ENCODE measurements at regions of chr4 and their contacts with region 1.

Region 1: GRCh38 chr4:26076000-26076587 is 162.1 kb downstream of the SMIM20 start:
- DNase-seq: peak; percentile 84
- ATAC-seq: peak; percentile 75
- H3K4me3 ChIP-seq: no peak overlapping the region
- H3K27ac ChIP-seq: peak overlapping the region; percentile 57
- H3K4me1 ChIP-seq: peaks cover 35% of the 10 kb centered on the region
- H3K27me3 ChIP-seq: no peaks in the 10 kb centered on the region
- CTCF ChIP-seq: no peak
- EP300 ChIP-seq: peak; percentile 70 to 90
- POLR2A ChIP-seq: no peak
- RAD21 ChIP-seq: no peak

Region 2: GRCh38 chr4:26028793-26029567 is 47.1 kb before region 1 on chr4:
- CTCF ChIA-PET with region 1: no interaction called
- POLR2A ChIA-PET with region 1: no interaction called
- RAD21 ChIA-PET with region 1: interaction called, 11 read pairs
- SMC1A ChIA-PET with region 1: interaction called, 3 read pairs
- in situ Hi-C with region 1: no loop called
- intact Hi-C with region 1: no loop called
- DNase-seq: no peak
- ATAC-seq: peak; percentile 99
- H3K4me3 ChIP-seq: no peak overlapping the region
- H3K27ac ChIP-seq: no peak overlapping the region
- H3K4me1 ChIP-seq: peaks cover 4% of the 10 kb centered on the region
- H3K27me3 ChIP-seq: no peaks in the 10 kb centered on the region
- CTCF ChIP-seq: peak; percentile 75 to 89 (median 85)
- EP300 ChIP-seq: no peak
- POLR2A ChIP-seq: no peak
- RAD21 ChIP-seq: peak; percentile 93

Region 3: GRCh38 chr4:26088433-26088928 is 12.4 kb after region 1 on chr4:
- CTCF ChIA-PET with region 1: interaction called, 9 read pairs
- POLR2A ChIA-PET with region 1: interaction called, 8 read pairs
- RAD21 ChIA-PET with region 1: interaction called, 31 read pairs
- SMC1A ChIA-PET with region 1: interaction called, 37 read pairs
- in situ Hi-C with region 1: no loop called
- intact Hi-C with region 1: no loop called
- DNase-seq: peak; percentile 80
- ATAC-seq: peak; percentile 92
- H3K4me3 ChIP-seq: no peak overlapping the region
- H3K27ac ChIP-seq: peak overlapping the region; percentile 29; the same call in 1 of the 2 replicates
- H3K4me1 ChIP-seq: peaks cover 30% of the 10 kb centered on the region
- H3K27me3 ChIP-seq: no peaks in the 10 kb centered on the region
- CTCF ChIP-seq: no peak
- EP300 ChIP-seq: peak; percentile 23 to 72; a peak in 2 of 4 replicates
- POLR2A ChIP-seq: no peak
- RAD21 ChIP-seq: no peak

Region 4: DNA sequence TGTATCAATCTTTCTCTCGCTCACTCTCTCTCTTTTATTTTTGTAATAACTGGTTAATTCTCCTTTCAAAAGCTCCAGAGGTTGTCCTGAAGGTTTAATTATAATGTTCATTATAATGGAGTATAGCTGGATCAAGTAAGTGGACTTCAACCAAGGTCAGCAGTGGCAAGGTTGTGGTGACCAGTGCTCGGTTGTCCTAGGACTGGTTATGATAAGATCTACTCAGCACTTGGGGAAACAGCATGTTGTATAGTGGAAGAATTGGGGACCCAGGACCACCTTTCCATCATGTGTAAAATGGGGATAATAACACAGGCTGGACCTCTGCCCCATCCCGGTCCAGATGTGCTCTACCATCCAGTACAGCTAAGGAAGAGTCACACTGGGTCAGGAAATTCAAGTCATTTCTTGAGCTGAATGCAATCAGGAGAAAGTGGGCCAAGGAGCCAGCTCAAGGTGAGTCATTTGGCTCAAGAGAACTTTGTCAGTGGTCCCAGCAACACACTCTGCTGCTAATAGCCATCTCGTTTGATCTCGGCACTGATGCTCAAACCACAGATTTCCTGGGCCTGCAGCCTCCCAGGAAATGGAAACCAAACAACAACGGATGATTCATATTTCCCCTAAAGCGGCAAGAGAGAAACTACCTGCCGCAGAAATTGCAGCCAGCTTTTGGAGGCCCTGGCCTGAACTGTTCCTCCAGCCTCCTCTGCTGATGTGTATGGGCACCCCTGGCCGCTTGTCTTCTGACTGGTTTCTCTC is 121.1 kb after region 1 on chr4:
- CTCF ChIA-PET with region 1: interaction called, 8 read pairs
- POLR2A ChIA-PET with region 1: no interaction called
- RAD21 ChIA-PET with region 1: interaction called, 13 read pairs
- SMC1A ChIA-PET with region 1: interaction called, 7 read pairs
- in situ Hi-C with region 1: no loop called
- intact Hi-C with region 1: loop called (anchors 5 kb)
- DNase-seq: peak; percentile 89
- ATAC-seq: peak; percentile 84
- H3K4me3 ChIP-seq: no peak overlapping the region
- H3K27ac ChIP-seq: peak overlapping the region; percentile 14; the same call in 1 of the 2 replicates
- H3K4me1 ChIP-seq: peaks cover 35% of the 10 kb centered on the region
- H3K27me3 ChIP-seq: no peaks in the 10 kb centered on the region
- CTCF ChIP-seq: no peak
- EP300 ChIP-seq: peak; percentile 49 to 50; a peak in 2 of 4 replicates
- POLR2A ChIP-seq: no peak
- RAD21 ChIP-seq: peak; percentile 37

Region 5: GRCh38 chr4:26404743-26405206 is 328.7 kb after region 1 on chr4:
- CTCF ChIA-PET with region 1: no interaction called
- POLR2A ChIA-PET with region 1: no interaction called
- RAD21 ChIA-PET with region 1: no interaction called
- SMC1A ChIA-PET with region 1: interaction called, 22 read pairs
- in situ Hi-C with region 1: loop called (anchors 5 kb)
- intact Hi-C with region 1: no loop called
- DNase-seq: no peak
- ATAC-seq: no peak
- H3K4me3 ChIP-seq: no peak overlapping the region
- H3K27ac ChIP-seq: no peak overlapping the region
- H3K4me1 ChIP-seq: peaks cover 10% of the 10 kb centered on the region
- H3K27me3 ChIP-seq: no peaks in the 10 kb centered on the region
- CTCF ChIP-seq: no peak
- EP300 ChIP-seq: no peak
- POLR2A ChIP-seq: no peak
- RAD21 ChIP-seq: no peak